Heart left ventricle (tissue), 16 donors: ENCODE measurements at regions of chr7 and their contacts with region 1.

Region 1: DNA sequence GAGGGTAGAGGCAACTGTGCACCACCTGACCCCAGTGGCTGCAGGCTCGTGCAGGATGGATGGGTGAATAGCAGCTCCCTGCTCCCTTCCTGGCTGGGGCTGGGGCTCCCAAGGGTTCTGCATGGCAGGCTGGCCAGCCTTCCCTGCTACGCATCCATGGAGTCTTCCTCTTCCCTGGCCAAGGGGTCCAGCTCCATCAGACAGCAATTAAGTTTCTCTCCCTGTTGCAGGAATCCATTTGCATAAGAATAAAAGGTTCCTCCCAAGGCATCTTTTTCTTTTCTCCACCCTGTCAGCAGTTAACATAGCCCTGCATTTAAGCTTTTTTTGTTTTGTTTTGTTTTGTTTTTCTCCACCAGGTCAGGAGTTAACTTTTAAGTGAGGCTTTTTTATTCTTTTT is 10.0 kb upstream of the CPA2 start:
- DNase-seq: no peak
- ATAC-seq: no peak
- H3K4me3 ChIP-seq: no peak overlapping the region
- H3K27ac ChIP-seq: no peak overlapping the region
- H3K4me1 ChIP-seq: no peaks in the 10 kb centered on the region
- H3K27me3 ChIP-seq: no peaks in the 10 kb centered on the region
- CTCF ChIP-seq: no peak
- POLR2A ChIP-seq: no peak

Region 2: DNA sequence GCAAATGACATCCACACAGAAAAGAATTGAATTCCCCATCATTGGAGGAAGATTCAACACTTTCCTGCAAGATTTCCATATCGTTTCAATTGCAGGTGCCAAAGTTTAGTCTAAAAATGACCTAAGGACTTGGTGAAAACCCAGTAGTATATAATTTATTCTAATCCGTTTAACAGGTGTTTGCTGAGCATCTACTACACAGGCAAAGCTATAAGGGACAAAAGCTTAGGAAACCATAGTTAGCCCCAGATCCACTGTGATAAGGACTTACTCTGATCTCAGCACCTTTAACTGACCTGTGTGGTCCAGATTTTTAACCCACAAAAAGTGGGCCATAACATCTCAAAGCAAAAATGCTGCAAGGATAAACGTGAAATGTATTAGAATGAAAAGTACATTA is 323.1 kb before region 1 on chr7:
- intact Hi-C with region 1: no loop called
- DNase-seq: no peak
- ATAC-seq: no peak
- H3K4me3 ChIP-seq: no peak overlapping the region
- H3K27ac ChIP-seq: no peak overlapping the region
- H3K4me1 ChIP-seq: peaks cover 0 to 15% (median under 1%) of the 10 kb centered on the region in 12 donors
- H3K27me3 ChIP-seq: no peaks in the 10 kb centered on the region
- CTCF ChIP-seq: no peak
- POLR2A ChIP-seq: no peak

Region 3: GRCh38 chr7:130010689-130011412 is 245.9 kb before region 1 on chr7:
- intact Hi-C with region 1: no loop called
- DNase-seq: peak in 4 of 5 donors; percentile 61 to 82 (median 70)
- ATAC-seq: peak; percentile 49 to 66 (median 58)
- H3K4me3 ChIP-seq: no peak overlapping the region
- H3K27ac ChIP-seq: peak overlapping the region in 5 of 12 donors; percentile 34 to 55 (median 41)
- H3K4me1 ChIP-seq: peaks cover 0 to 23% (median 5%) of the 10 kb centered on the region in 12 donors
- H3K27me3 ChIP-seq: no peaks in the 10 kb centered on the region
- CTCF ChIP-seq: peak; percentile 86 to 95 (median 92)
- POLR2A ChIP-seq: no peak

Region 4: DNA sequence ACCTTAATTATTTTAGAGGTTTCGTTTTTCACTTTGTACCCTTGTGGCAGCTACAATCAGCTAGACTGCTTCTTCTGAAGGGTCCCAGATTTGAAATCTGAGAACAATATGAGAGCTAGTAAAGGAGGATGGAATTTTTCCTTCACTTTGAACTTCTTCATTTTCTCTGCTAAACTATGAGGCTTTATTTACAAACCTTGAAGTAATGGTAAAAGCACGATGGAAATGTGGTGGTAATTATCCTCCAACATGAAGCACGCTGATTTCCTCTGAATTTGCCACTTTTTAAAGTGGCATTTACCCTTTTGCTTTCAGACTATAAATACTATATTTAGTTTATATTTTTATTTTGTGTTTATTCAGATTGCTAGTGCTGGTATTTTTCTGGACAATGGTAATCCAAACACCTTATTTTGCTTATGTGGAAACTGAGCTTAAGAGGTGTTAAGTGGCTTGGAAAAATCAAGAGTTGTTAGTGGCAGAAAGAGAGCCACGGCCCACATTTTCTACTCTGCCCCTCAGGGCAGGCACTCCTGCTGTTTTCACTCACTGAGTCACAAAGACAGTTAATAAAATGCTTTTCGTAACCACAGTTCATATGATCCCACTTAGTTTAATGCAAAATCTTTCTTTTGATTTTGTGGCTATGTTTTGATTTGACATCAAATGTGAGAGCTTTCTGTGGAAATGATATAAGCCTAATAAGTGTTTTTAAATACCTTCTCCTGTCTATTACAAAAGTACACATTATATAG is 46.3 kb before region 1 on chr7:
- intact Hi-C with region 1: no loop called
- DNase-seq: no peak
- ATAC-seq: no peak
- H3K4me3 ChIP-seq: no peak overlapping the region
- H3K27ac ChIP-seq: no peak overlapping the region
- H3K4me1 ChIP-seq: peaks cover 0 to 6% (median 0%) of the 10 kb centered on the region in 12 donors
- H3K27me3 ChIP-seq: peaks cover 0 to 5% (median 0%) of the 10 kb centered on the region in 9 donors
- CTCF ChIP-seq: no peak
- POLR2A ChIP-seq: no peak

Region 5: GRCh38 chr7:130299866-130300265 is 43.2 kb after region 1 on chr7:
- intact Hi-C with region 1: loop called in 1 of 10 experiments (anchors 2 kb)
- DNase-seq: no peak
- ATAC-seq: no peak
- H3K4me3 ChIP-seq: no peak overlapping the region
- H3K27ac ChIP-seq: no peak overlapping the region
- H3K4me1 ChIP-seq: no peaks in the 10 kb centered on the region
- H3K27me3 ChIP-seq: no peaks in the 10 kb centered on the region
- CTCF ChIP-seq: no peak
- POLR2A ChIP-seq: no peak

Region 6: DNA sequence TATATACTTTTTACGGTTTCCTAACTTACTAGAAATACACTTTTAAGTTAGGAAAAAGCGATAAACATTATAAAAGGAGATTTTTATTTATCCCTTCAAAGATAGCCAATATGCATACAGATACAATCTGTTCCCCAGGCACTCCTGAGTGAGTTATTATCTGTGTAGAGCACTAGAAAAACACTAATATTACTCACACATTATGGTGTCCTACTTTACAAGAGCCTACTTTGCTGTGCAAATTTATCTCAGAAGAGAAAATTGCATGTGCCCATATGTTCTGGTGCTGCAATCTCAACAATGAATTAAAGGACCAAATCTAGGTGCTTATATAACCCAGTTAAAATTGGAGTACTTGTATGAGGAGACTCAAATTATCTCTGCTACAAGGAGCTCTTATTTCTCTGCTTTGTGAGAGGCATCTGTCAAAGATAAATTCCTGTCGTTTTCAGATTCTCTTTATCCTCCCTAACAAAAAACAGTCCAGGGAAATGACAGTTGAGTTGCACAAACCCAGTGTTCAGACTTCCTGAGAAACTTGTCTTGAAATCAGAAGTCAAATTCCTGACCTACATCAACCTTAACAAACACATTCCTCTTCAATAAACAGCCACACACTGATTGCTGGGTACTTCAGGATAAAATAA is 152.5 kb after region 1 on chr7:
- intact Hi-C with region 1: no loop called
- DNase-seq: no peak
- ATAC-seq: no peak
- H3K4me3 ChIP-seq: no peak overlapping the region
- H3K27ac ChIP-seq: no peak overlapping the region
- H3K4me1 ChIP-seq: peaks cover 0 to 7% (median 2%) of the 10 kb centered on the region in 12 donors
- H3K27me3 ChIP-seq: no peaks in the 10 kb centered on the region
- CTCF ChIP-seq: no peak
- POLR2A ChIP-seq: no peak